PC-3 (cell line): ENCODE measurements at regions of chr11 and their contacts with region 1.

Region 1: GRCh38 chr11:123069908-123070821 is 8.2 kb upstream of the HSPA8 start:
- DNase-seq: no peak
- ATAC-seq: no peak
- H3K4me3 ChIP-seq: no peak overlapping the region
- H3K27ac ChIP-seq: no peak overlapping the region
- H3K4me1 ChIP-seq: peaks cover 22% of the 10 kb centered on the region
- H3K27me3 ChIP-seq: no peaks in the 10 kb centered on the region
- CTCF ChIP-seq: no peak

Region 2: DNA sequence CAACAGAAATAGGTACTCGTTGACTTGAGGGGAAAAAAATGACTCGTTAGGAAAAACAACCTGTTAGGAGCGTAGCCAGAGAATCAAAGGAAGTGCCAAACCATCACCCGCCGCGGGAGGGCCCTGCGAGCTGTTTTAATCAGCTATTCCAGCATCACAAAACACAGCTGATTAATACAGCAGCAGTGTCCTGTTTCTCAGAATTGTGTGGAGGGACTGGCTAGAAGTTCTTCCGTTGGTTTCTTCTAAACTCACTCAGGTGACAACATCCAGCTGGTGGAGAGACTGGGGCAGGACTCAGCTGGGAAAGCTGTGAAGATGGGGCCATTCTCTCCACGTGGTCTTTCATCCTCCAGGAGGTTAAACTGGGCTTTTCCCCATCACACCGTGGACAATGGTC is 36.3 kb before region 1 on chr11:
- CTCF ChIA-PET with region 1: no interaction called
- POLR2A ChIA-PET with region 1: no interaction called
- intact Hi-C with region 1: no loop called
- DNase-seq: no peak
- ATAC-seq: no peak
- H3K4me3 ChIP-seq: no peak overlapping the region
- H3K27ac ChIP-seq: no peak overlapping the region
- H3K4me1 ChIP-seq: no peaks in the 10 kb centered on the region
- H3K27me3 ChIP-seq: no peaks in the 10 kb centered on the region
- CTCF ChIP-seq: no peak

Region 3: DNA sequence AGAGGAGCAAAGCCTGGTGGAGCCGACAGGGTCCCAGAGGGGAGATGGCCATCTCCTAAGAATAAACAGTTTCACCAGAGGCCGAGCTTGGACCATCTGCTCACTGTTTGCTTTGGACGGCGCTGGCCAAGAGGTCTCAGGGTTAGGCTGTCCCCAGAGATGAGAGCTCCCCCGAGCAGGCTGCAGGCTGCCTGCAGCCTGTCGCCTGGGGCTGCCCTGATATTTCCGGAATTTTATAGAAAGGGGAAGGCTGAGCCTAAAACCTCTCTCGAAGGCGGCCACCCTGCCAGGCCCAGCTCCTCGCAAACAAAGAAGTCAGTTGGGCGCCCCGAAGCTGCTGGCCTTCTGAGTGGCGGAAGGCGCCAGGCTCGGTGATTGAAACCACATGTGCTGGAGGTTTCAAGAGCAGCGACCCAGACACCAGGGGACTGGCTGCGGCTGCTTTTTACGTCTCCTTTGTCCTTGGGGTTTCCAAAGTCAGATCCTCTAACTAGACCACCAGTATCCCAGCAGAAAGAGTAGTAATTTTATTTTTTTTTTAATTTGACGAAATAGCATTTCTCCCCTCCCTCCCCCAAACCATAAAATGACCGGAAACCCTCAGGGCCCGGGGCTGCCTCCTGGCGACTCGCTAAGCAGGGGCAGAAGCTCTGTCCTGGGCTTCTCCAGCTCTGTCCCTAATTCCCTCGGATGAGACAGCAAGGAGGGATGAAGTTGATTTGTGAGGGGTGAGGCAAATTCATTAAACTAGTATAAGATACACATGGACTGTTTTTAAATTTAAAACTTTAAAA is 67.5 kb after region 1 on chr11:
- CTCF ChIA-PET with region 1: no interaction called
- POLR2A ChIA-PET with region 1: no interaction called
- intact Hi-C with region 1: loop called (anchors 2 kb)
- DNase-seq: no peak
- ATAC-seq: no peak
- H3K4me3 ChIP-seq: no peak overlapping the region
- H3K27ac ChIP-seq: no peak overlapping the region
- H3K4me1 ChIP-seq: no peaks in the 10 kb centered on the region
- H3K27me3 ChIP-seq: no peaks in the 10 kb centered on the region
- CTCF ChIP-seq: no peak

Region 4: GRCh38 chr11:123221096-123221561 is 151.0 kb after region 1 on chr11:
- CTCF ChIA-PET with region 1: no interaction called
- POLR2A ChIA-PET with region 1: no interaction called
- intact Hi-C with region 1: no loop called
- DNase-seq: no peak
- ATAC-seq: no peak
- H3K4me3 ChIP-seq: no peak overlapping the region
- H3K27ac ChIP-seq: no peak overlapping the region
- H3K4me1 ChIP-seq: peaks cover 8% of the 10 kb centered on the region; the same call in 1 of the 2 replicates
- H3K27me3 ChIP-seq: no peaks in the 10 kb centered on the region
- CTCF ChIP-seq: no peak